Panc1 (cell line): ENCODE measurements at regions of chr1 and their contacts with region 1.

Region 1: DNA sequence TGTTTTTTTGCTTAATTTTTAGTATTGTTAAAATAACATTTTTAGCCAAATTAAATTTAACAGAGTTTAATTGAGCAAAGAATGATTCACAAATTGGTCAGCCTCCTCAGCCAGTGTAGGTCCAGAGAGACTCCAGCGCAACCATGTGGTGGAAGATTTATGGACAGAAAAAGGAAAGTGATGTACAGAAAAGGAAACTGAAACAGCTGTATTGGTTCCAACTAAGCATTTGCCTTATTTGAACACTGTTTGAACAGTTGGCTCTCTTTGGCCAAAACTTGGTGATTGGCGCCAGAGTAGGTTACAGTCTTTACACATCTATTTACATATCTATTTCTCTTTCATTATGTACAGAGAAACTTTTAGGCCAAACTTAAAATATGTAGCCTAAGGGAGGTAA is 19.4 kb downstream of the RPS6KC1 start:
- DNase-seq: no peak
- ATAC-seq: peak; percentile 89
- H3K4me3 ChIP-seq: no peak overlapping the region
- H3K27ac ChIP-seq: 0 out of 2 replicates have a peak overlapping the region, but pooled peaks have one; percentile 29
- H3K4me1 ChIP-seq: peaks cover 5% of the 10 kb centered on the region; the same call in 1 of the 2 replicates
- H3K27me3 ChIP-seq: no peaks in the 10 kb centered on the region
- CTCF ChIP-seq: peak; percentile 56

Region 2: DNA sequence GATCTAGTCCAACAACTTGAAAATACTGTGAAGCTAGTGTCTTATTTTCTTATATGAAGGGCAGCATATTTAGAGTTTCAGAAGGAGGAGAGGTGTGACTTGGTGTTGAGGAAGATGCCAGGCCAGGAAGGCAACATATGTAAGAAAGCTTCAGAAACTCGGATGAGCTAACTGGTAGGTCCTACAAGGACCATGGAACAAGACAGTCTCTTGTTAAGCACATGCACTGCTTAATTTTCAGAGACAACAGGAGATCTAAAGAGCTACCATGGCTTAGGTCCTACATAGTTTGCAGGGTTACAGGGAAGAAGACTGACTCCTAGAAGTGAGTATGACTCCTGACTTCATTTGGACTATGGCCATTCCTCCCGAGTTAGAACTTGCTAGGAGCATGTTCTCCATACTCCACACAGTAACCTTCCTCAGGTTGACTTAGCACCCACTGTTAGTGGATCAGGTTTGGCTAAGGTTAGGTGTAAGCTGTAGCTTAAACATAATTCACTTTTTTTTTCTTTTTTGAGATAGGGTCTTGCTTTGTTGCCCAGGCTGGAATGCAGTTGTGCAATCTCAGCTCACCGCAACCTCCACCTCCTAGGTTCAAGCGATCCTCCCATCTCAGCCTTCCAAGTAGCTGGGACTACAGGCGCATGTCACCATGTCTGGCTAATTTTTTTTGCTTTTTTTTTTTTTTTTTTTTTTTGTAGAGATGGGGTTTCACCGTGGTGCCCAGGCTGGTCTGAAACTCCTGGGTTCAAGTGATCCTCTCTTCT is 85.7 kb before region 1 on chr1:
- CTCF ChIA-PET with region 1: interaction called, 18 read pairs
- POLR2A ChIA-PET with region 1: no interaction called
- in situ Hi-C with region 1: no loop called
- intact Hi-C with region 1: no loop called
- DNase-seq: no peak
- ATAC-seq: no peak
- H3K4me3 ChIP-seq: no peak overlapping the region
- H3K27ac ChIP-seq: no peak overlapping the region
- H3K4me1 ChIP-seq: no peaks in the 10 kb centered on the region
- H3K27me3 ChIP-seq: no peaks in the 10 kb centered on the region; the same call in 1 of the 2 replicates
- CTCF ChIP-seq: no peak